Breast epithelium (tissue), 4 donors: ENCODE measurements at regions of chr7 and their contacts with region 1.

Region 1: GRCh38 chr7:26365077-26365900 is 73.6 kb downstream of the SNX10 start:
- DNase-seq: peak in 1 of 2 donors; percentile 41
- H3K4me3 ChIP-seq: no peak overlapping the region
- H3K27ac ChIP-seq: no peak overlapping the region
- H3K4me1 ChIP-seq: no peaks in the 10 kb centered on the region
- H3K27me3 ChIP-seq: peaks cover 0 to 7% of the 10 kb centered on the region in 2 donors
- CTCF ChIP-seq: peak; percentile 38 to 88 (median 87)
- POLR2A ChIP-seq: no peak

Region 2: GRCh38 chr7:27160546-27161213 is 795.4 kb after region 1 on chr7:
- intact Hi-C with region 1: loop called (anchors 5 kb)
- DNase-seq: peak; percentile 87 to 91
- H3K4me3 ChIP-seq: peak overlapping the region; percentile 57 to 85 (median 65)
- H3K27ac ChIP-seq: peak overlapping the region; percentile 91 to 96
- H3K4me1 ChIP-seq: no peaks in the 10 kb centered on the region
- H3K27me3 ChIP-seq: peaks cover 6 to 32% of the 10 kb centered on the region in 2 donors
- CTCF ChIP-seq: peak; percentile 99
- POLR2A ChIP-seq: no peak

Region 3: DNA sequence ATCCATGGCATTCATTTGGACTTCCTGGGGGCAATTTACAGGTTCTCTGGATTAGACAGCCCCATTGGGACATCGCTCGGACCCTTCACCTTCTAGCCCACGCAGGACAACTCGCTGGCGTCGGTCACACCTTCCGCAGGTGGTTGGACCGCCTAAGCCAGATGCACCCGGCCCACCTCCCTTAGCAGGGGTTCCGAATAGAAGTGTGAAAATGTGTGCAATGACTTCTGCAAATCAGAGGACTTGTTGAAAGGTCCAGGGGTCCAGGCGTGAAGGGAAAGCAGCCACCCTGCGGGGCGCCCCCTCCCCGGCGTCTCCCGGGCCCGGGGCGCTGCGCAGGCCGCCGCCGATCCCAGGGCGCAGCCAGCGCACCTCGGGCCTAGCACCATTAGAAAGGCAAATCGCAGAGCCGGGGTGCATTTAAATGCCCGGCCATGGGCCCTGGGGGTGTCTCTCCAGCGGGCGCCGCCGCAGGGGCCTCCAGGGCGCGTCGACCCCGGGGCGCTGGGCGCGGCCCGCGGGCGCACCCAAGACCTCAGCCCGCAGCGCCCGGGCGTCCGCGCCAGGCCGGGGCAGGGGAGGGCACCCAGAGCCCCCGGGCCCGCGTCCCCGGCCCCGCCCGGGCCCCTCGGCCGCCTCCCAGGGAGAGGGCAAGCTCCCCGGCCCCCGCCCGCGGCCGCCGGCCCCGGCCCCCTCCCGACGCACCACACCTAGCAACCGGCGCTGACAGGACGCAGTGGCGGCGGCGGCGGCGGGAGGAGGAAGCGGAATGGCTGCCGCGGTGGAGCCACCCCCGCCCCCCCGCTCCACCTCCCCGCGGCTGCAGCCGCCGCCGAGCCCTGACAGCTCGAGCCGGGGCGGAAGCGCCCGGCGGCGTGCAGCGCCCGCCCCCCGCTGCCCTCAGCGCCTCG is 1814.1 kb after region 1 on chr7:
- intact Hi-C with region 1: loop called (anchors 5 kb)
- DNase-seq: peak; percentile 47 to 63
- H3K4me3 ChIP-seq: peak overlapping the region; percentile 71 to 89 (median 74)
- H3K27ac ChIP-seq: peak overlapping the region; percentile 68 to 88
- H3K4me1 ChIP-seq: peaks cover 5 to 6% of the 10 kb centered on the region in 2 donors
- H3K27me3 ChIP-seq: no peaks in the 10 kb centered on the region
- CTCF ChIP-seq: no peak
- POLR2A ChIP-seq: no peak